PC-3 (cell line): ENCODE measurements at regions of chr11 and their contacts with region 1.

Region 1: GRCh38 chr11:94834911-94835593 is 66.9 kb downstream of the AMOTL1 start:
- DNase-seq: no peak
- ATAC-seq: no peak
- H3K4me3 ChIP-seq: no peak overlapping the region
- H3K27ac ChIP-seq: no peak overlapping the region
- H3K4me1 ChIP-seq: peaks cover 45% of the 10 kb centered on the region
- H3K27me3 ChIP-seq: no peaks in the 10 kb centered on the region
- CTCF ChIP-seq: no peak

Region 2: GRCh38 chr11:94851864-94852636 is 17.0 kb after region 1 on chr11:
- CTCF ChIA-PET with region 1: no interaction called
- POLR2A ChIA-PET with region 1: no interaction called
- intact Hi-C with region 1: no loop called
- DNase-seq: peak; percentile 48
- ATAC-seq: no peak
- H3K4me3 ChIP-seq: no peak overlapping the region
- H3K27ac ChIP-seq: no peak overlapping the region
- H3K4me1 ChIP-seq: no peaks in the 10 kb centered on the region
- H3K27me3 ChIP-seq: no peaks in the 10 kb centered on the region
- CTCF ChIP-seq: no peak

Region 3: GRCh38 chr11:94876645-94877442 is 41.8 kb after region 1 on chr11:
- CTCF ChIA-PET with region 1: no interaction called
- POLR2A ChIA-PET with region 1: no interaction called
- intact Hi-C with region 1: loop called (anchors 2 kb)
- DNase-seq: peak; percentile 84
- ATAC-seq: peak; percentile 79
- H3K4me3 ChIP-seq: no peak overlapping the region
- H3K27ac ChIP-seq: peak overlapping the region; percentile 22
- H3K4me1 ChIP-seq: peaks cover 44% of the 10 kb centered on the region
- H3K27me3 ChIP-seq: no peaks in the 10 kb centered on the region
- CTCF ChIP-seq: peak; percentile 58

Region 4: DNA sequence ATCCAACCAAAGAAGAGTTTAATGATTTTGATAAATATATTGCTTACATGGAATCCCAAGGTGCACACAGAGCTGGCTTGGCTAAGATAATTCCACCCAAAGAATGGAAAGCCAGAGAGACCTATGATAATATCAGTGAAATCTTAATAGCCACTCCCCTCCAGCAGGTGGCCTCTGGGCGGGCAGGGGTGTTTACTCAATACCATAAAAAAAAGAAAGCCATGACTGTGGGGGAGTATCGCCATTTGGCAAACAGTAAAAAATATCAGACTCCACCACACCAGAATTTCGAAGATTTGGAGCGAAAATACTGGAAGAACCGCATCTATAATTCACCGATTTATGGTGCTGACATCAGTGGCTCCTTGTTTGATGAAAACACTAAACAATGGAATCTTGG is 162.4 kb after region 1 on chr11:
- CTCF ChIA-PET with region 1: no interaction called
- POLR2A ChIA-PET with region 1: no interaction called
- intact Hi-C with region 1: no loop called
- DNase-seq: peak; percentile 41
- ATAC-seq: no peak
- H3K4me3 ChIP-seq: no peak overlapping the region
- H3K27ac ChIP-seq: no peak overlapping the region
- H3K4me1 ChIP-seq: no peaks in the 10 kb centered on the region
- H3K27me3 ChIP-seq: no peaks in the 10 kb centered on the region
- CTCF ChIP-seq: peak; percentile 54